ENCODE measurements at regions of chr17 and their contacts with region 1.

Region 1: DNA sequence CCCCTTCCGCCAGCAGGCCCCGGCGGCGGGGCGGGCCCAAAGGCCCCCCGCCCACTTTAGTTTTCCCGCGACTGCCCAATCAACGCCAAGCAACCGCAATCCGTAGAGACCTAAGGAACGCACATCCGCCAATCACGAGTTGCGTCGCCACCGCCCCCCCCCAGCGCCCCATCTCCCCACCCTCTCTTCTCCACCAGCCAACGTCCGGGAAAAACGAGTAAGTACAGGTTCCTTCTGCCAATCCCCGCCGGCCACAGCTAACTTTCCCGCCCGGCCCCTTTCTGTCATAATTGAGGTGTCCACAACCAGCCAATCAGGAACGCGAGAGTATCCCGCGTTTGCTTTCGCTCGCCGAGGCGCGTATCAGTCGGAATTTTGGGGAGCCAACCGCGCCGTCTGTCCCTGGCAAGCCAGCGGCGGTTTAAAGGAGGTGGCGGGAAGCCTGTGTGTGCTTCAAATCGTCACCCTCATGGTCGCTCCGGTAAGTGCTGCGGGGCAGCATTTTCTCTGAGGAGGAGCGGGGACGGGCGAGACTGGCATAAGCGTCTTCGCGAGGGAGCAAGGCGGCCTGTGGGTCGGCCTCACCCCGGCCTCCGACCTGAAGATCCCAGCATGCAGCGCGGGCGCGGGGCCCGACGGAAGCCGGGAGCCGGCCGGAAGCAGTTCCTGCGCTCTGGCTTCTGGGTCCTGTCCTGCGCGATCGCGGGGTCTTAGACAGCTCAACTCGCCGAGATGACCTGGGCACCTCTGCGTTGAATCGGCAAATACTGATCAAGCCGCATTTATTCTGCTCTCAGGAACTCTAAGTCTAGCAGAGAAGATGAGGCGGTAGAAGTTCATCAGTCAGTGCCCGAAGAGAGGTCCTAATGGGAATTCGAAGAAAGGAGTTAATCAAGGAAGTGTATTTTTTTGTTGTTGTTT is at the start of gene MIS12:
- DNase-seq: peak; percentile 98
- CTCF ChIP-seq: no peak

Region 2: GRCh38 chr17:4789901-4790704 is 696.4 kb before region 1 on chr17:
- CTCF ChIA-PET with region 1: no interaction called
- POLR2A ChIA-PET with region 1: no interaction called
- DNase-seq: peak; percentile 93
- CTCF ChIP-seq: peak; percentile 68

Region 3: DNA sequence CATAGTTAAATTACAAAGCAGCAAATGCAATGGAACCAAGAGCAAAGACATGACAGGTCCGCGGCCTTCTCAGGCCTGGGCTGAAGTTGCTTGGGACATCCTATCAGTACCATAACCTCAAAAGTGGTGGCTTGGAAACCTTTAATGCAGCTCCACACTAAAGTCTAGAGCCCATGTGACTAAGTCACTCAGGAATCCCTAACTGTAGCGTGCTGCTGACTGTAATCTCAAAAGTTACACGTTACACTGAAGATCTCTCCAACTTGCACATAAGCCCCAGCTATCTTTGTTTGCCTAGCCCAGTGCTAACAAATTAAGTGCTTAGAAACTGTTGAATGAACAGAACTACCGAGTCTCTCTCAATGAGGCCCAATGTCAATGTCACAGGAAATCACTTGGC is 94.8 kb before region 1 on chr17:
- CTCF ChIA-PET with region 1: no interaction called
- POLR2A ChIA-PET with region 1: no interaction called
- DNase-seq: no peak
- CTCF ChIP-seq: no peak

Region 4: GRCh38 chr17:5468075-5468473 is 18.4 kb before region 1 on chr17:
- CTCF ChIA-PET with region 1: interaction called, 4 read pairs
- POLR2A ChIA-PET with region 1: interaction called, 12 read pairs
- DNase-seq: peak; percentile 34
- CTCF ChIP-seq: no peak

Region 5: DNA sequence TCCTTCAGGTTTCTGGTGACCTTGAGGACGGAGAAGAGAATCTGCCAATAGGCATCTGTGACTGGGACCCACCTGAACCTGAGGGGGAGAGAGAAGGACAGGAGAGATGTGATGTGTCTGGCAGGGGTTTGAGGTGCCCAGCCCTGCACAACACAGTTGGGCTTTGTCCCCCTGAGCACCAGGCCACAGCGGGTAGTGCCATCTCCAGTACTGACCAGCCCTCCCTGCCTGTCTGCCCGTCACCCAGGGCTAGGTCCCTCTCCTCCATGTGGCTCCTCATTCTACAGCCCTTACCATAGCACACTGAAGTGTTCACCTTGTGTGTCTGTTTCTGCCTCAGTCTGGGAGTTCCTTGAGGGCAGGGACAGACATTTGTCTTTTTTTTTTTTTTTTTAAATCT is 67.0 kb after region 1 on chr17:
- CTCF ChIA-PET with region 1: no interaction called
- POLR2A ChIA-PET with region 1: no interaction called
- DNase-seq: no peak
- CTCF ChIP-seq: no peak

Region 6: GRCh38 chr17:5785867-5786509 is 299.5 kb after region 1 on chr17:
- CTCF ChIA-PET with region 1: no interaction called
- POLR2A ChIA-PET with region 1: no interaction called
- DNase-seq: peak; percentile 48
- CTCF ChIP-seq: no peak

Measured in GM10248 (cell line).